Right ventricle myocardium inferior (tissue), 1 donor: ENCODE measurements at regions of chr10 and their contacts with region 1.

Region 1: GRCh38 chr10:122342293-122343134 is 32.0 kb upstream of the PLEKHA1 start:
- DNase-seq: no peak
- ATAC-seq: peak; percentile 40

Region 2: GRCh38 chr10:122298598-122299301 is 43.8 kb before region 1 on chr10:
- intact Hi-C with region 1: loop called (anchors 2 kb)
- DNase-seq: peak; percentile 71
- ATAC-seq: peak; percentile 86

Region 3: DNA sequence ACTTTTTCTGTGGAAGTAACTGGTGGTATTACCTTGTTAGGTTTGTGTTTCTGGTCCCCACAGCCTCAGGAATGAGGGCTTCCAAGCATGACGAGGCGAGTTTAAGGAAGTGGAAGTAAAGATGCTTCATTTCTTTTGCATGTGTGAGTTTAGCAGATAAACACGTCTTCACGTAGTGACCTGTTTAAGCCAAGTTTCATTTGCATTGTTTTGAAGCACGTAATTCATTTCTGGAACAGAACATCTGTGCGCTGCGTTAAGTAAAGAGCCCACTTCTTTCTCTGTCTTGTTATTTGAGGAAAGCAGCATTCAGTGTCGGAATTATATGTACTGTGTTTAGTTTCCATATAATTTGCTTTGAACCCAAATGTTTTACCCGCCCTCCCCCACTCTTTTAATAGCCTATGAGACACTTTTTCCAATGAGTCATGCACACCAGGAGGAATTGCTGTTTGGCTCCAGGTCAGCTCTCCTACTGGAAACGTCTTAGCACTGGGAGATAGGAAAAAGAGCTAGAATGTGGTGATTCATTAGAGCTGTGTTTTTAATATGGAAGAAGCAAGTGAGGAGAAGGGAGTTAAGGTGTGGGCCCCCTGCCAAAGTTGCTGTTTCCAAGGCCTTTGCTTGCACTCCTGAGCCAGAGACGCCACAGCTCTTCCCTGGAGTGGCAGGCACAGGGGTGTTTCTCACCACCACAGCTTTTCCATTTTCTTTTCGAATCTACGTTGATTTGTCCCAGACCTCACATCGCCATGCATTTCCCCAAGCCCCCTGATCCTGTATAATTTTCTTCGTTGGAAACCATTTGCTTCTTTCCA is 34.6 kb before region 1 on chr10:
- intact Hi-C with region 1: loop called (anchors 2 kb)
- DNase-seq: no peak
- ATAC-seq: peak; percentile 83

Region 4: GRCh38 chr10:122374237-122374869 is 31.8 kb after region 1 on chr10 and contains the start of gene PLEKHA1:
- intact Hi-C with region 1: loop called (anchors 2 kb)
- DNase-seq: peak; percentile 98
- ATAC-seq: peak; percentile 95
- total RNA-seq, gene PLEKHA1: 68.0 TPM

Region 5: DNA sequence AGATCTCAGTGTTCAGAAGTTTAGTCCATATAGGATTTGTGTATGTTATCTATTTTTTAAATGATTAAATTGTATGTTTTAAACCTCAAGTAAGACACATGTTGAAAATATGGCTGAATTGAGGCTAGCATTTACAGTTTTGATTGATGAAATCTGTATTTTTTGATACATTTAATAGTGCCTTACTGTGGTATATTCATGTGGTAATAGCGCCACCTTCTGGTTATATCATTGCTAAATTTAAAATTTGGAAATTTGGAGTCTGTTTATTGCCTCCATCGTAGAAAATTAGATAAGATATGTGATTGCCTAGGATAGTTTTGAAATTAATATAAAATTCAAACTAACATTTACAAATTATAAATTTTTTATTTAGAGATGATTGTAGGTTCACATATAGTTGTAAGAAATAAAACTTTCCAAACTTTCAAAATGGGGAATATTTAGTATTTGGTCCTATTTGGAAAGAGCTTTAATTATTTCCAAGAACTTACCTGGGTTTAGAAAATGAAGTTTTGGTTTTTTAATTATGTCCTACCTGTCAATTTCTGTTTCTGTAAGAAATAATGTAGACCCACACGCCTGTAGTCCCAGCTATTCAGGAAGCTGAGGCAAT is 92.8 kb after region 1 on chr10:
- intact Hi-C with region 1: loop called (anchors 2 kb)
- DNase-seq: no peak
- ATAC-seq: peak; percentile 33

Region 6: DNA sequence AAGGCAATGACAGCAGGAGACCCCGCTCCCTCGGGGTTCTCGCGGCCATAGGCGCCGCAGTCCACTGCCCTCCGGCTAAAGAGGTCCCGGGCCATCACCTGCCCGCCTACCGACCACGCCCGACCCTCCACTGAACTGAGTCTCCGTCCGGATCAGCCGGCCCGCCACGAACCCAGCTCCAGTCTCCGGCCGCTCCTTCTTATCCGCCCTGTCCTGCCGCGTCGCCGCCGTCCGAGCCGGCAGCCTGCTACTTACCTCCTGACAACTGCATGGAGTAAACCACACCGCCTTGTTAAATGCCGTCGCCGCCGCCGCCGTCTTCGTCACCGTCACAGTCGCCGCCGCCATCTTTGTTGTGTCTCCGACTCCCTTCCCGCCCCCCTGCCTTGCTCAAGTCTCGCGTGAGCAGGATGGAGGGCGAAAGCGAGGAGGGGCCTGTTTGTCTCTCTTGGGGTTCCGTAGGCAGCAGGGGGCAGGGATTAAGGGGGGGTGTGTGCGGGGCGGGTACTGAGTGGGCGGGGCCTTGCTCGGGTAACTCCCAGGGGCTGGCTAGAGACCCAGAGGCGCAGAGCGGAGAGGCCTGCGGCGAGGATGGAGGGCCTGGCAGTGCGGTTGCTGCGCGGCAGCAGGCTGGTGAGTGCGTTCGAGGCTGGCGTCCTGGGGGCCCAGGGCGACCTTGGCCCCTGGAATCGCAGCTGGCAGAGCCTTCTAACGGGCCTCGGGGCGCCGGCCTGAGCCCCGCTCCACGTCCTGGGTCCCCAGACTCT is 666.1 kb after region 1 on chr10 and contains the starts of genes ACADSB and IKZF5:
- intact Hi-C with region 1: no loop called
- DNase-seq: peak; percentile 97
- ATAC-seq: peak; percentile 99
- total RNA-seq, gene ACADSB: 72.9 TPM
- total RNA-seq, gene IKZF5: 12.0 TPM